Gastrocnemius medialis (tissue), 4 donors: ENCODE measurements at regions of chr12 and their contacts with region 1.

Region 1: DNA sequence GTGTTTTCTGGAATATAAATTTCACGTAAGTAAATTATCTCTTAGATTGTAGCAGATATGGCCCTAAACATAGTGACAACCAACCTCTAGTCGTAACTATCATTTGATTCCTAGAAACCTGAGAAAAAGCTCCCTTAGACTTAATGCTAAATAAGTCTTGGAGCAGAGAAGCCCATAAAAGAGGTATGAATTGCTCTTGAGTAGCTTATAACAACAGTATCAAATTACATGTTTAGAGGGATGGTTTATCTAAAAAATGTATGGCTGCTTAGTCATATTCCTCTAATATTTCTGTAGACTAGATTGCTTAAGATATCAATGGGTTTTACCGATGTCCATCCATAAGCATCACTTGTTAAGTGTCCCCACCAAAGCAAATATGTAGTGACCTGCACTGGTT is 259.7 kb downstream of the NELL2 start:
- DNase-seq: no peak
- ATAC-seq: no peak
- H3K4me3 ChIP-seq: no peak overlapping the region
- H3K27ac ChIP-seq: no peak overlapping the region
- H3K4me1 ChIP-seq: no peaks in the 10 kb centered on the region
- H3K27me3 ChIP-seq: no peaks in the 10 kb centered on the region
- CTCF ChIP-seq: no peak
- POLR2A ChIP-seq: no peak

Region 2: GRCh38 chr12:44709166-44709565 is 92.8 kb after region 1 on chr12:
- in situ Hi-C with region 1: loop called in 1 of 4 experiments (anchors 25 kb)
- intact Hi-C with region 1: no loop called
- DNase-seq: no peak
- ATAC-seq: no peak
- H3K4me3 ChIP-seq: no peak overlapping the region
- H3K27ac ChIP-seq: no peak overlapping the region
- H3K4me1 ChIP-seq: no peaks in the 10 kb centered on the region
- H3K27me3 ChIP-seq: no peaks in the 10 kb centered on the region
- CTCF ChIP-seq: no peak
- POLR2A ChIP-seq: no peak